SK-N-SH (cell line): ENCODE measurements at regions of chr12 and their contacts with region 1.

Region 1: DNA sequence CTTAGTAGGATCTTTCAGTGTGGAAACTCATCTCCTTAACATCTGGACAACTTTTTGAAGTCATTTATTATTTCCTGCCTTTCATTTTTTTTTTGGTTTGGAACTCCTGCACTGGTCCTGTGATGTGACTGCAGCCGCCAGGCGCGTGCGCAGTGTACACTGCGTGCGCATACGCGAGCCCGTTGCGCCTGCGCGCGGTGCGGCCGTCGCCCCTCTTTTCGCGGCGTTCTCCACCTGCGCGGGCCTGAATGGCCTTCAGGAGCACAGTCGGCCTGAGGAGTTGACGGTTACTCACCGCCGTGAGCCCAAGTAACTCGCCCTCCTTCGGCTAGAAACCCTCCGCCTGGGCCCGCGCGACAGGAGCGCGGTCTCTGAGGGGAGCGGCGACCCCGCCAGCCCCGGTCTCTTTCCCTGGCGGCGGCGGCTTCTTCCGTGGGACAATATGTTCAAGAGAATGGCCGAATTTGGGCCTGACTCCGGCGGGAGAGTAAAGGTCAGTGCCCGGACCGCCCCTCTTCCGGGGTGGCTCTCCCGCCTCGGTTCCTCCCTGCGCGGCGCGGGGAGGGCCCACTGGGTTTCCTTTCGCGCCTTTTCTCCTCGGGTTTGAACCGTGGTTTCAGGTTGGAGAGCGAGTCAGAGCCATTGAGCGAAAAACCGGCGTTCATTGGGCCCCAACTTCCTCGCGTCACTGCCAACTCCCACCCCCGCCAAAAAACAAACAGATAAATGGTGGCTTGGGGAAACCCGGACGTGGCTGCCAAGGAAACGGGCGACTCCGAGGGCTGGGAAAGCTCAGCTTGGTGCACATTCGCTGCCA is at the start of gene YEATS4:
- DNase-seq: peak; percentile 92
- H3K4me3 ChIP-seq: peak within 1 kb of the TSS; percentile 83 to 90
- H3K27ac ChIP-seq: peak within 1 kb of the TSS; percentile 93
- H3K4me1 ChIP-seq: peaks cover 4 to 6% of the 10 kb centered on the region in 2 experiments; a peak in 3 of 4 replicates
- H3K27me3 ChIP-seq: no peaks in the 10 kb centered on the region
- CTCF ChIP-seq: no peak
- EP300 ChIP-seq: no peak
- RAD21 ChIP-seq: no peak
- polyA plus RNA-seq, gene YEATS4: 11.4 and 13.2 TPM in 2 replicates

Region 2: DNA sequence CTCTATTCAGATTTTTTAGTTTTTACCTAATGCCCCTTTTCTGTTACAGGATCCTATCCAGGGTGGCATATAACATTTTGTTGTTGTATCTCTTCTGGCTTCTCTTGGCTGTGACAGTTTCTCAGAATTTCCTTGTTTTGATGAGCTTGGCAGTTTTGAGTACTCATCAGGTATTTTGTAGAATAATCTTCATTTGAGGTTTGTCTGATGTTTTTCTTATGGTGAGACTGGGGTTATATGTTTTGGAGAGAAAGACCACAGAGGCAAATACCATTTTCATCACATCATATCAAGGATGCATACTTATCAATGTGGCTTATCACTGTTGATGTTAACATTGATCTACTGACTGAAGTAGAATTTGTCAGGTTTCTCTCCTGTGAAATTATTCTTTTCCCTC is 25.6 kb before region 1 on chr12:
- CTCF ChIA-PET with region 1: interaction called, 11 read pairs
- POLR2A ChIA-PET with region 1: no interaction called
- DNase-seq: no peak
- H3K4me3 ChIP-seq: no peak overlapping the region
- H3K27ac ChIP-seq: no peak overlapping the region
- H3K4me1 ChIP-seq: no peaks in the 10 kb centered on the region; a peak in 1 of 4 replicates
- H3K27me3 ChIP-seq: peaks cover 9% of the 10 kb centered on the region; the same call in 1 of the 2 replicates
- CTCF ChIP-seq: no peak
- EP300 ChIP-seq: no peak
- RAD21 ChIP-seq: no peak